ENCODE measurements at regions of chr15 and their contacts with region 1.

Region 1: DNA sequence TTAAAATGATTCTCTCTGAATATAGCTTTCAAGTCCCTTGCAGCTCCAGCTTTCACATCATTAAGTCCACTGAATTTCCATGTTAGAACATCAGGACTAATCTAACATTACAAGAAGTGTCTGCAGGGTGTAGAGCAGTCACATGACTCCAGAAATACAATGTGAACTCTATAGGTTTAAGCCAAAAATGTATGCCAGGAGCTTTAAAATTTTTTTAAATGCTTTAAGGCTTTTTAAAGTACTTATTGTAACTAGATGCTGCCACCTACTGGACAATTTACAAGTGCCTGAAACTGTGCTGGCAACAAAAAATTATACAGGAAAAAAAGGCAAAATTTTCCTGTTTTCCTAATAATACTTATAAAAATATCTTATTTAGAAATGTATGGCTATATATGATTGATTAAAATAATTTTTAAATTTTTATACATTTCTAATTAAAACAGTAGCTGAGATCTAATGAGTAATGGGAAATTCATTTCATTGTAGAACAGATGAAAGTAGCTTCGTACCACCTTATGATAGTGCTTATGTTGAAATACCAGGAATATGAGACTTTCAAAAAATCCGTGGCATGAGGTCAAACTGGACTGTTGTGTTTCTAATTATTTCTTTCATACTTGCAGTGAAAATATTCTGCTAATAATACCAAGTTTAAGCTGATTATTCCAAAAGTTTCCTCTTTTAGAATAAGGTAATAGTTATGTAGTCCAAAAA is 25.7 kb downstream of the FSIP1 start:
- DNase-seq: no peak
- H3K4me3 ChIP-seq: peak overlapping the region in 1 of 2 experiments; percentile 33; a peak in 1 of 4 replicates
- H3K27ac ChIP-seq: no peak overlapping the region
- H3K4me1 ChIP-seq: no peaks in the 10 kb centered on the region; a peak in 1 of 4 replicates
- H3K27me3 ChIP-seq: no peaks in the 10 kb centered on the region
- CTCF ChIP-seq: peak; percentile 81
- EP300 ChIP-seq: no peak
- RAD21 ChIP-seq: peak; percentile 78

Region 2: DNA sequence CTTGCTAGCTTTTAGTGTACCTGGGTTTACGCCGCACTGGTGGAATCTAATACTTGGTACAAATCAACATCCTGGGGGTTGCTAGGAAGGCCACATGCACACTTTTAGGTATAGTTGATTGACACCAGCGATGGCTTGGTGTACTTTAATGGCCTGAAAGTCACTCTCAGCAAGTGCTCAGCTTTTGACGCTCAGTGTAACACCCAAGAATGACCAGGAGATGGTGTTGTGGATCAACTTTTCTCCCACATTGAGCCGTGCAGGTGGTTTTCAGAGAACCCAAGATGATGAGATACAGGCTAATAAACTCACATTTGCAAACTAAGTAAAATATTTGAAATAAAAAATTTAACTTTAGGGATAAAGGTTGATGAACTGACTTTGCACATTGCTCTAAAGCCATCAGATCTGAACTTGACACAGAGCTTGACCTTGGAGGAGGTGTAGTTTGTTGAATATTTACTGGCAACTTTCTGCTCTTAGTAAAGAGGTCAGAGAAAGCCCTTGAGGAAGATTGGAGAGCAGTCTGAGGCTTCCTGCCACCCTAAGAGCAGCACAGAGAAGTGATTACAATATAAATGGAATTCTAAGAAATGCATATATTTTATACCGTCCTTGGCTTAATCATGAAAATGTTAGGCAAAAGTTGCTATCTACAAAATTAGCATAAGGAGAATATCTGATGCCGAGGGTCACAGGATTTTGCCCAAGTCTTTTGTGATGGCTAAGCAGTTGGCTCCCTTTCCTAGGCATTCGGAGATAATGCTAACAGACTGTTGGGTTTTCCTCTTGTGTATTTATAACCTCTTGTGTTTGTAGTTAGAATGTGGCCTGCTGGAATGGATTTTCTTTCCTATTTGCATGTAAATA is 1048.9 kb before region 1 on chr15:
- CTCF ChIA-PET with region 1: interaction called, 81 read pairs
- POLR2A ChIA-PET with region 1: no interaction called
- DNase-seq: peak; percentile 44
- H3K4me3 ChIP-seq: no peak overlapping the region
- H3K27ac ChIP-seq: peak overlapping the region; percentile 18 to 36; a peak in 1 of 4 replicates
- H3K4me1 ChIP-seq: no peaks in the 10 kb centered on the region; a peak in 2 of 4 replicates
- H3K27me3 ChIP-seq: no peaks in the 10 kb centered on the region
- CTCF ChIP-seq: peak; percentile 85
- EP300 ChIP-seq: no peak
- RAD21 ChIP-seq: peak; percentile 98

Region 3: GRCh38 chr15:39177561-39177960 is 579.4 kb before region 1 on chr15:
- CTCF ChIA-PET with region 1: interaction called, 20 read pairs
- POLR2A ChIA-PET with region 1: no interaction called
- DNase-seq: no peak
- H3K4me3 ChIP-seq: no peak overlapping the region
- H3K27ac ChIP-seq: no peak overlapping the region
- H3K4me1 ChIP-seq: peaks cover 8 to 20% of the 10 kb centered on the region in 2 experiments
- H3K27me3 ChIP-seq: no peaks in the 10 kb centered on the region
- CTCF ChIP-seq: no peak
- EP300 ChIP-seq: no peak
- RAD21 ChIP-seq: no peak

Region 4: GRCh38 chr15:39680868-39681267 is 76.1 kb before region 1 on chr15:
- CTCF ChIA-PET with region 1: interaction called, 139 read pairs
- POLR2A ChIA-PET with region 1: no interaction called
- DNase-seq: no peak
- H3K4me3 ChIP-seq: no peak overlapping the region
- H3K27ac ChIP-seq: peak overlapping the region in 1 of 2 experiments; percentile 36; a peak in 3 of 4 replicates
- H3K4me1 ChIP-seq: peaks cover 0 to 3% of the 10 kb centered on the region in 2 experiments; a peak in 2 of 4 replicates
- H3K27me3 ChIP-seq: no peaks in the 10 kb centered on the region
- CTCF ChIP-seq: no peak
- EP300 ChIP-seq: peak in 1 of 2 experiments; percentile 42; a peak in 1 of 4 replicates
- RAD21 ChIP-seq: no peak

Region 5: GRCh38 chr15:39704689-39705088 is 52.3 kb before region 1 on chr15:
- CTCF ChIA-PET with region 1: interaction called, 33 read pairs
- POLR2A ChIA-PET with region 1: no interaction called
- DNase-seq: no peak
- H3K4me3 ChIP-seq: no peak overlapping the region
- H3K27ac ChIP-seq: peak overlapping the region in 1 of 2 experiments; percentile 15; a peak in 1 of 4 replicates
- H3K4me1 ChIP-seq: no peaks in the 10 kb centered on the region
- H3K27me3 ChIP-seq: no peaks in the 10 kb centered on the region
- CTCF ChIP-seq: no peak
- EP300 ChIP-seq: no peak
- RAD21 ChIP-seq: no peak

Region 6: DNA sequence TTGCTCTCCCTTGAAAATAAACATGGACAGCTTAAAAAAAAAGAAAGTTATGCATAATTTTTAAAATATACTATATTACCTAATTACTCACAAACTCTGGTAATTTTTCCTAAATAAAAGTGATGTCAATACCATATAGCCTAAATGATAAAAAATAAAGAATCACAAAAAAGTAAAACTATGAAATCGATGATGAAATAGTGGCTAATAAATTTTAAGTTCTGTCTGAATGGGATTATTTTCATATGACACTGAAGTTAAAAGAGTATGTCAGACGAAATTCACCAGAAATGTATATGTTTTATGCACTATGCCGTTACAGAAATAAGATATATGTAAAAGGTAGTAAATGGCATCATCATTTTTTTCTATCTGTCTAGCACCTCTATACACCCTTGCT is 25.7 kb before region 1 on chr15:
- CTCF ChIA-PET with region 1: interaction called, 21 read pairs
- POLR2A ChIA-PET with region 1: no interaction called
- DNase-seq: no peak
- H3K4me3 ChIP-seq: no peak overlapping the region
- H3K27ac ChIP-seq: no peak overlapping the region
- H3K4me1 ChIP-seq: no peaks in the 10 kb centered on the region; a peak in 1 of 4 replicates
- H3K27me3 ChIP-seq: no peaks in the 10 kb centered on the region
- CTCF ChIP-seq: no peak
- EP300 ChIP-seq: no peak
- RAD21 ChIP-seq: no peak

Region 7: GRCh38 chr15:39770748-39771689 is 14.1 kb after region 1 on chr15:
- CTCF ChIA-PET with region 1: interaction called, 35 read pairs
- POLR2A ChIA-PET with region 1: no interaction called
- DNase-seq: no peak
- H3K4me3 ChIP-seq: peak overlapping the region in 1 of 2 experiments; percentile 22; a peak in 1 of 4 replicates
- H3K27ac ChIP-seq: peak overlapping the region; percentile 25 to 55; a peak in 3 of 4 replicates
- H3K4me1 ChIP-seq: peaks cover 0 to 11% of the 10 kb centered on the region in 2 experiments; a peak in 1 of 4 replicates
- H3K27me3 ChIP-seq: no peaks in the 10 kb centered on the region
- CTCF ChIP-seq: no peak
- EP300 ChIP-seq: no peak
- RAD21 ChIP-seq: no peak

Region 8: GRCh38 chr15:39920510-39921273 is 163.7 kb after region 1 on chr15:
- CTCF ChIA-PET with region 1: no interaction called
- POLR2A ChIA-PET with region 1: no interaction called
- DNase-seq: peak; percentile 95
- H3K4me3 ChIP-seq: peak overlapping the region; percentile 71 to 92
- H3K27ac ChIP-seq: peak overlapping the region; percentile 73 to 96
- H3K4me1 ChIP-seq: peaks cover 5 to 6% of the 10 kb centered on the region in 2 experiments; a peak in 2 of 4 replicates
- H3K27me3 ChIP-seq: no peaks in the 10 kb centered on the region
- CTCF ChIP-seq: no peak; the same call in 1 of the 2 replicates
- EP300 ChIP-seq: no peak
- RAD21 ChIP-seq: no peak